ENCODE measurements at regions of chr3 and their contacts with region 1.

Region 1: DNA sequence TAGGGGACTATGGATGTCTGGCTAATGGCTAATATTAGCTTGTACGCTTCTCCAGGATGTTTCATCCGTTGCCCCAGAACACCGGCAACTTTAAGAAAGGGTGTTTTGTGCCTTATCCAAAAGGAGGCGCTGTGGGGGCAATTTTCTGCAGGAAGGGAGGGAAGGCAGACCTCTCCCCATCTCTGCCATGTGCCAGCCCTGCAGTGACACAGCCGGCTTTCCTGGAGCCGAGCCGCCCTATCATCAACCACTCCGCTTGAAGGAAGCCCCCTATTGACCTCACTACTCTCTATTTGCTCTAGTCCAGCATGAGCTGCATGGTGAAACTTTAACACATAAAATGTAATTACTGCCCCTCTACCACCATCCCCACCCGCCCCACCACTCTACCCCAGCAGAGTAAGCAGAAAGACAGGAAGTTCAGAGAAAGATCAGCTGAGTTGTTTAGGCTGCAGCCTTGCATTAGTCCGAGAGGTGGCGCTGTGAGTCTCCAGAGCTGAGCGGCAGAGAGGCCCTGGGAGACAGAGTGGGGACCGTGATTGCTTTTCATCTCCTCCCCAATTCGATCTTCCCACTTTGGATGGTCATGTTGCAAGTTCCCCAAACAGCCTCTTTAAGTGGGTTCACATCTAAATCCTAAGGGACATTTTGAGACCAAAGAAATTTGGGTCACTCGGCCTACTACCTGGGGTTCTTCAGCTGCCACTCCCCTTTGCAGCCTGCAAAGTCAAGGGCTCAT is 24.5 kb upstream of the RAD18 start:
- DNase-seq: peak; percentile 72
- H3K4me3 ChIP-seq: no peak overlapping the region
- H3K27ac ChIP-seq: no peak overlapping the region
- H3K4me1 ChIP-seq: no peaks in the 10 kb centered on the region
- H3K27me3 ChIP-seq: no peaks in the 10 kb centered on the region
- CTCF ChIP-seq: peak; percentile 88

Region 2: DNA sequence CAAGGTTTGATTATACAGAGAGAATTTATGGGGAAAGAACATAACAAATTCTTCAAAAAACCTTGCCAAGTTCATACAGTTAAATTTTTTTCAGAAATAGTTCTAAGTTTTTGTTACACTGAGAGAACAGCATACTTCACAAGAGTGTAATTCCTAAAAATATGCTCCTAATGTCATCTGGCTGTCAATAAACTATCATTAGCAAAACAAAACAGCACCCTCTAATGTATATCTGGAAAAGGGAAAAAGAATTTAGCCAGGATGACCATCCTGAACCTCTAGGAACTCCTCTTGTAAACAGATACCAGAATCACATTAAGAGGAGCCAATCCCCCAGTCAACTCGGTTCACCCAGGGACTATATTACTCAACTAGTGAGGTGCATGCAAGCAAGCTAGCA is 87.8 kb before region 1 on chr3:
- CTCF ChIA-PET with region 1: interaction called, 13 read pairs
- POLR2A ChIA-PET with region 1: no interaction called
- intact Hi-C with region 1: no loop called
- DNase-seq: no peak
- H3K4me3 ChIP-seq: no peak overlapping the region
- H3K27ac ChIP-seq: no peak overlapping the region
- H3K4me1 ChIP-seq: no peaks in the 10 kb centered on the region
- H3K27me3 ChIP-seq: no peaks in the 10 kb centered on the region
- CTCF ChIP-seq: no peak

Region 3: DNA sequence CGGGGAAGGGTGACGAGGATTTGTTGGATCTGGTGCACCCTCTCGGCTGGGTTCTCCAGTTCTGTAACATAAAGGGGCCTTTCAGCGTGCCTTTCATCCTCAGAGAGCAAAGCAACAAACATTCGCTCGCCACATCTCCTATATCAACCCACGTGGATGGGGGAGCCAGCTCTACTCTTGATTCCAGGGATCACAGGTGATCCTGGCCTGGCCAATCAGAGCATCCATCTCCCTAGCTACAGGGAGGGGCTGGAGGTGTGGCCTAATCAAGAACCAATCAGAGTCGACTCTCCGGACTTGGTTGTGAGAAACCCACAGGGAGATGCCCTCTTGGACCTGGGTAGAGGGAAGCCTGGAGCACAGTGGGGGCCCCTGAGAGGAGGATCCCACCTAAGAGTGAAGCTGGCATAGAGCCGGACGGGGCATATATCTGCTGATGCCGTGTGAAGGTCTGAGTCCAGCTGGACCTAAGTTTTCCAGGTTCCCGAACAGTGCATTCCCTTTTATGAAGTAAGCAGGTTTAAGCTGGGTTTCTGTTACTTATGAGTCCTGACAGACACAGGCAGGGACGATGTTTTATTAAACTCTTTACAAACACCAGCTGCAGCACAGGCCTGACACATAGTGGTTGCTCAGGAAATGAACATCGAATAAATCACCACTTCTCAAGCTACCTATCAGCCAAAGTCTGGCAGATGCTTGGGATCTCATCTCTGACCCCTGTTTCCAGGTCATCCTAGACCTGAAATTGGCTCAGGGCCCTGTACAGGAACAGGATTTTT is 26.2 kb after region 1 on chr3:
- CTCF ChIA-PET with region 1: interaction called, 14 read pairs
- POLR2A ChIA-PET with region 1: no interaction called
- intact Hi-C with region 1: no loop called
- DNase-seq: peak; percentile 16
- H3K4me3 ChIP-seq: no peak overlapping the region
- H3K27ac ChIP-seq: no peak overlapping the region
- H3K4me1 ChIP-seq: no peaks in the 10 kb centered on the region
- H3K27me3 ChIP-seq: peaks cover 9% of the 10 kb centered on the region
- CTCF ChIP-seq: 0 out of 2 replicates have a peak, but pooled peaks have one; percentile 25

Region 4: GRCh38 chr3:9067352-9067975 is 79.7 kb after region 1 on chr3:
- CTCF ChIA-PET with region 1: interaction called, 3 read pairs
- POLR2A ChIA-PET with region 1: no interaction called
- intact Hi-C with region 1: loop called (anchors 1 kb)
- DNase-seq: peak; percentile 67
- H3K4me3 ChIP-seq: no peak overlapping the region
- H3K27ac ChIP-seq: no peak overlapping the region
- H3K4me1 ChIP-seq: no peaks in the 10 kb centered on the region
- H3K27me3 ChIP-seq: no peaks in the 10 kb centered on the region
- CTCF ChIP-seq: peak; percentile 93

Region 5: GRCh38 chr3:9254764-9255163 is 266.9 kb after region 1 on chr3:
- CTCF ChIA-PET with region 1: interaction called, 13 read pairs
- POLR2A ChIA-PET with region 1: no interaction called
- intact Hi-C with region 1: no loop called
- DNase-seq: no peak
- H3K4me3 ChIP-seq: no peak overlapping the region
- H3K27ac ChIP-seq: no peak overlapping the region
- H3K4me1 ChIP-seq: peaks cover under 1% of the 10 kb centered on the region
- H3K27me3 ChIP-seq: peaks cover 13% of the 10 kb centered on the region
- CTCF ChIP-seq: no peak

Region 6: DNA sequence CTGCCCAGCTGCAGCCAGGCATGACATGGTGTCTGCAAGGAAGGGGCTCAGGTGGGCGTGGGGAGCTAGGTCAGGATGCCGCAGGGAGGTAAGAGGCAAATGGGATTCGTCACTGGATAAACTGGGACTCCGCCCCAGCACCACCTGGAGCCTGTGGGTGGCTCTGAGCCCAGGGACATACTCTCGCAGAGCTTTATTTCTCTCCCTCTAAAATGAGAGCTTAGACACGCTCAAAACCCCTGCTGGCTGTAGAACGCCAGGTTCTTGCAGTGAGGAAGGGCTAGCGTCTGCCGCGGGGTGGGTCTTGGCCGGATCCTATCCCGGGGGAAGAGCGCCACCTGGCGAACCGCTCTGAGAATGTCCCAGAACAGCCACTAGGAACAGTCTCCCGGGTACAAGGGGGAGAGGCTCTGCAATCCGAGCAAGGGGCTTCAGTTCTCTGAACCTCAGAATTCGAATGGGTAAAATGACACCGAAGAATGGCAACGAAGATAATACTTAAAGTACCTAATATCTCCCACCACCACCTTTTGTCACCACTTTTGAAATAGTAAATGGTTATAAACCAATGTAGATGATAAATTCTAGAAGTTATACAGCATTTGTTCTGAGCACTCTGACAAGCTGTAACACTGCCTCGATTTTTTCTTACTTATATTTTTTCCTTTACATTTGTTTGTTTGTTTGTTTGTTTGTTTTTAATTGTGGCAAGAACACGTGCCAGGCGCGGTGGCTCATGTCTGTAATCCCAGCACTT is 314.8 kb after region 1 on chr3:
- CTCF ChIA-PET with region 1: interaction called, 27 read pairs
- POLR2A ChIA-PET with region 1: no interaction called
- intact Hi-C with region 1: loop called (anchors 1 kb)
- DNase-seq: peak; percentile 87
- H3K4me3 ChIP-seq: no peak overlapping the region
- H3K27ac ChIP-seq: no peak overlapping the region
- H3K4me1 ChIP-seq: no peaks in the 10 kb centered on the region
- H3K27me3 ChIP-seq: no peaks in the 10 kb centered on the region
- CTCF ChIP-seq: peak; percentile 90

Region 7: DNA sequence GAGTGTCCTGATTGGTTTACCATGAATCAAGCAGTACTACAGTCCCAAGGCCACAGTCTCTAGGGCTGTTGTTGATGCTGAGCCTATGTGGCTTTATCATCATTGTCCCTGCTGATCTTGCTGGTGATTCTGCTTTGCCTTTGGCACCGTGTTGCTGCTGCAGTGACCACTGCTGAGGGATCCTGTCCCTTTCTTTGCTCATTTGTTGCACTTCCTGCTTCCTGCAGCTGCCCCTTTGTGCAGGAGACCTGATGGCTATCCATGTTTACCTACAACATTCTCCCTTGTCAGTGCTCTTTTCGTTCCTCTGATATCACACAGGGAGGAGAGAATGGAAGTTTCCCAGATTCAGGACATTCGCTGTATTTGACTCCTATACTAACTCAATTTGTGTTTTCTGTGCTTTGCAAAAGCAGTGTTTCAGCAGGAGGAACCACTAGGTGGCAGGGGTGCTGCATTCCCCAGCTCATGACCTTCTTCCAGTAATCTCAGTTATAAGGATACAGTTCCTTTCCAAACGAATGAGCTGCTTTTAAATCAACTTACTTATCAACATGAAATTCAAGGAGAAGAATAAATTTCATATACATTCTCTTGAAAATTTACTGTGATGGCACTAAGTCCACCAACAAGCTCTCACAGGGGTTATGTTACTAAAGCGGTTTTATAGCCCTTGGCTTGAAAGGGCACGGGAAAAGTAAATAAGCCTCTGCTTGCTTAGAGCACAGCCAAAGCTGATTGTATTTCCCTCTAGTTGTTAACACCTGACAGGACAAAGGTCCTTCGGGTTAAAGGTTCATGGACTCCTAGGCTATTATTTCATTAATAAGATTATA is 365.3 kb after region 1 on chr3:
- CTCF ChIA-PET with region 1: no interaction called
- POLR2A ChIA-PET with region 1: no interaction called
- intact Hi-C with region 1: no loop called
- DNase-seq: peak; percentile 68
- H3K4me3 ChIP-seq: no peak overlapping the region
- H3K27ac ChIP-seq: no peak overlapping the region
- H3K4me1 ChIP-seq: no peaks in the 10 kb centered on the region
- H3K27me3 ChIP-seq: no peaks in the 10 kb centered on the region
- CTCF ChIP-seq: peak; percentile 91